ENCODE measurements at regions of chr20 and their contacts with region 1.

Region 1: GRCh38 chr20:5658912-5659345 is 91.3 kb upstream of the SHLD1 start:
- DNase-seq: peak; percentile 38
- ATAC-seq: peak; percentile 81
- H3K4me3 Mint-ChIP-seq: peak overlapping the region; percentile 54
- H3K27ac Mint-ChIP-seq: peak overlapping the region; percentile 88
- H3K4me1 Mint-ChIP-seq: peaks cover 54% of the 10 kb centered on the region
- H3K27me3 Mint-ChIP-seq: no peaks in the 10 kb centered on the region
- CTCF ChIP-seq: no peak

Region 2: GRCh38 chr20:5580936-5581708 is 77.8 kb before region 1 on chr20:
- CTCF ChIA-PET with region 1: no interaction called
- POLR2A ChIA-PET with region 1: no interaction called
- intact Hi-C with region 1: no loop called
- DNase-seq: no peak
- ATAC-seq: no peak
- H3K4me3 Mint-ChIP-seq: no peak overlapping the region
- H3K27ac Mint-ChIP-seq: no peak overlapping the region
- H3K4me1 Mint-ChIP-seq: peaks cover 2% of the 10 kb centered on the region
- H3K27me3 Mint-ChIP-seq: no peaks in the 10 kb centered on the region
- CTCF ChIP-seq: no peak

Region 3: DNA sequence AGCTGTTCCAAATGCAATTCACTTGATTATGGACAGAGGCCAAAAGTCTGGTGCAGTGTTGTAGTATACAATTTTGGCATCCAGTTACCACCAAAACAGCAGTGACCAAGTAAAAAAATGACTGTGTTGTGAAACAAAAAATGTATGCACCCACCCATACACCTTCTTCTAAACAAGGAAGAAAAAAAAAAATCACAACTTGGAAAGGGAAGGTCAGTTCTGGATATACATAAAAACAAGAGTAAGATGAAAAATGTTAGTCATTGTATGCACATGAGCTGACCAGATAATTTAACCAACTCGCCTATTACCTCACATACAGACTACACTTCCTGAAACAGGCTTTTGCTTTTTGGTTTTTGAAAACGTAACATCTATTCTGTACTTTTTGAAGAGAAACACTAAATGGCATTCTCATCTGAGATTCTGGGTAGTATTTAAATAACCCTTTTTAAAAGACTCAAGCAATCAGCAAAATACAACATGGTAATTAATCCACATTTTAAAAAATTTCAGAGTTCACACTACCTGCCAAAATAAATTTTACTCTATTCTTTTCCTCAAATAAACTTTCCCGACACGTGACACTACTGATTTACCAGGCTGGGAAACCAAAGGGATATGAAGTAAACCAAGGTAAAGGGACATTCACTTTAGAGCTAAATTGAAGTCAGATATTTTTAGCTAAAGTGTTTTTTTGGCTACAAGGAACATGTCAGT is 50.3 kb before region 1 on chr20:
- CTCF ChIA-PET with region 1: no interaction called
- POLR2A ChIA-PET with region 1: interaction called, 17 read pairs
- intact Hi-C with region 1: no loop called
- DNase-seq: no peak
- ATAC-seq: no peak
- H3K4me3 Mint-ChIP-seq: peak overlapping the region; percentile 99
- H3K27ac Mint-ChIP-seq: peak overlapping the region; percentile 100
- H3K4me1 Mint-ChIP-seq: peaks cover 67% of the 10 kb centered on the region
- H3K27me3 Mint-ChIP-seq: no peaks in the 10 kb centered on the region
- CTCF ChIP-seq: no peak

Region 4: GRCh38 chr20:5627463-5628050 is 31.4 kb before region 1 on chr20:
- CTCF ChIA-PET with region 1: no interaction called
- POLR2A ChIA-PET with region 1: no interaction called
- intact Hi-C with region 1: no loop called
- DNase-seq: no peak
- ATAC-seq: no peak
- H3K4me3 Mint-ChIP-seq: no peak overlapping the region
- H3K27ac Mint-ChIP-seq: no peak overlapping the region
- H3K4me1 Mint-ChIP-seq: peaks cover 2% of the 10 kb centered on the region
- H3K27me3 Mint-ChIP-seq: no peaks in the 10 kb centered on the region
- CTCF ChIP-seq: no peak

Region 5: DNA sequence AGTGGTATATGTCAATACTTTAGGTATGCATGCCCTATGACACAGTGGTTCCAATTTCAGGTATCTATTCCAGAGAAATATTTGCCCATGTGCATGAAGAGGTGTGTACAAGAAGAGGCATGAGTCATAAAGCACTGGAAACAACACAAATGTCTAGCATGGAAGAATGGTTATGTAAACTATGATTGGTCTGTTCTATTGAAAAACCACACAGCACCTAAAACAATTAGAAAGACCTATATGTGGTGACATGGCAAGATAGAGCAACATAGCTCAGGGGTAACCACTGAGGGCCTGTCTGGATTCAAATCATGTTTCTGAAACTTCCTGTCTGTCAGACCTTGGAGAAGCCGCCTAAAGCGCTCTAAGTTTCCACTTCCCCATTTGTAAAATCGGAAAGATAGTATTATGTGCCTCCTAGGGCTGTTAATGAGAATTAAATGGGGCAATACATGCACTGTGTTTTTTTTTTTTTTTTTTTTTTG is 15.3 kb after region 1 on chr20:
- CTCF ChIA-PET with region 1: no interaction called
- POLR2A ChIA-PET with region 1: interaction called, 5 read pairs
- intact Hi-C with region 1: loop called (anchors 1 kb)
- DNase-seq: no peak
- ATAC-seq: peak; percentile 87
- H3K4me3 Mint-ChIP-seq: peak overlapping the region; percentile 13
- H3K27ac Mint-ChIP-seq: peak overlapping the region; percentile 77
- H3K4me1 Mint-ChIP-seq: peaks cover 30% of the 10 kb centered on the region
- H3K27me3 Mint-ChIP-seq: no peaks in the 10 kb centered on the region
- CTCF ChIP-seq: no peak

Region 6: GRCh38 chr20:5691918-5692618 is 33.1 kb after region 1 on chr20:
- CTCF ChIA-PET with region 1: no interaction called
- POLR2A ChIA-PET with region 1: interaction called, 6 read pairs
- intact Hi-C with region 1: loop called (anchors 2 kb)
- DNase-seq: peak; percentile 35
- ATAC-seq: peak; percentile 99
- H3K4me3 Mint-ChIP-seq: peak overlapping the region; percentile 33
- H3K27ac Mint-ChIP-seq: peak overlapping the region; percentile 13
- H3K4me1 Mint-ChIP-seq: peaks cover 22% of the 10 kb centered on the region
- H3K27me3 Mint-ChIP-seq: no peaks in the 10 kb centered on the region
- CTCF ChIP-seq: no peak

Region 7: GRCh38 chr20:5788385-5788895 is 129.5 kb after region 1 on chr20:
- CTCF ChIA-PET with region 1: interaction called, 3 read pairs
- POLR2A ChIA-PET with region 1: no interaction called
- intact Hi-C with region 1: loop called (anchors 5 kb)
- DNase-seq: no peak
- ATAC-seq: peak; percentile 99
- H3K4me3 Mint-ChIP-seq: no peak overlapping the region
- H3K27ac Mint-ChIP-seq: no peak overlapping the region
- H3K4me1 Mint-ChIP-seq: peaks cover 15% of the 10 kb centered on the region
- H3K27me3 Mint-ChIP-seq: no peaks in the 10 kb centered on the region
- CTCF ChIP-seq: no peak

Measured in activated B cell treated with CpG ODN at 0.5 μM for 24 hours (primary cell).